Activated CD8-positive, alpha-beta memory T cell treated with anti-CD3 and anti-CD28 coated beads, Interleukin-2, amount 10 ng/mL, durations not matched to agents 7 days and 5 days (primary cell): ENCODE measurements at regions of chr10 and their contacts with region 1.

Region 1: GRCh38 chr10:8331883-8332729 is 277.6 kb downstream of the GATA3 start:
- DNase-seq: peak; percentile 94
- ATAC-seq: peak; percentile 94
- H3K4me3 Mint-ChIP-seq: peak overlapping the region; percentile 79
- H3K27ac Mint-ChIP-seq: peak overlapping the region; percentile 95
- H3K4me1 Mint-ChIP-seq: peaks cover 61% of the 10 kb centered on the region
- H3K27me3 Mint-ChIP-seq: no peaks in the 10 kb centered on the region

Region 2: GRCh38 chr10:8059959-8060703 is 272.0 kb before region 1 on chr10:
- CTCF ChIA-PET with region 1: interaction called, 13 read pairs
- DNase-seq: peak; percentile 91
- ATAC-seq: peak; percentile 57
- H3K4me3 Mint-ChIP-seq: peak overlapping the region; percentile 91
- H3K27ac Mint-ChIP-seq: peak overlapping the region; percentile 96
- H3K4me1 Mint-ChIP-seq: peaks cover 78% of the 10 kb centered on the region
- H3K27me3 Mint-ChIP-seq: peaks cover 2% of the 10 kb centered on the region

Region 3: GRCh38 chr10:8360365-8360764 is 28.3 kb after region 1 on chr10:
- CTCF ChIA-PET with region 1: interaction called, 12 read pairs
- DNase-seq: no peak
- ATAC-seq: peak; percentile 69
- H3K4me3 Mint-ChIP-seq: peak overlapping the region; percentile 12
- H3K27ac Mint-ChIP-seq: peak overlapping the region; percentile 81
- H3K4me1 Mint-ChIP-seq: peaks cover 65% of the 10 kb centered on the region
- H3K27me3 Mint-ChIP-seq: peaks cover 4% of the 10 kb centered on the region

Region 4: GRCh38 chr10:8365935-8366911 is 34.1 kb after region 1 on chr10:
- CTCF ChIA-PET with region 1: interaction called, 12 read pairs
- DNase-seq: peak; percentile 73
- ATAC-seq: peak; percentile 56
- H3K4me3 Mint-ChIP-seq: peak overlapping the region; percentile 37
- H3K27ac Mint-ChIP-seq: peak overlapping the region; percentile 79
- H3K4me1 Mint-ChIP-seq: peaks cover 74% of the 10 kb centered on the region
- H3K27me3 Mint-ChIP-seq: no peaks in the 10 kb centered on the region

Region 5: GRCh38 chr10:8404391-8405120 is 72.5 kb after region 1 on chr10:
- CTCF ChIA-PET with region 1: interaction called, 13 read pairs
- DNase-seq: peak; percentile 82
- ATAC-seq: peak; percentile 54
- H3K4me3 Mint-ChIP-seq: peak overlapping the region; percentile 70
- H3K27ac Mint-ChIP-seq: peak overlapping the region; percentile 92
- H3K4me1 Mint-ChIP-seq: peaks cover 78% of the 10 kb centered on the region
- H3K27me3 Mint-ChIP-seq: no peaks in the 10 kb centered on the region